WTC11 (cell line): ENCODE measurements at regions of chr11 and their contacts with region 1.

Region 1: DNA sequence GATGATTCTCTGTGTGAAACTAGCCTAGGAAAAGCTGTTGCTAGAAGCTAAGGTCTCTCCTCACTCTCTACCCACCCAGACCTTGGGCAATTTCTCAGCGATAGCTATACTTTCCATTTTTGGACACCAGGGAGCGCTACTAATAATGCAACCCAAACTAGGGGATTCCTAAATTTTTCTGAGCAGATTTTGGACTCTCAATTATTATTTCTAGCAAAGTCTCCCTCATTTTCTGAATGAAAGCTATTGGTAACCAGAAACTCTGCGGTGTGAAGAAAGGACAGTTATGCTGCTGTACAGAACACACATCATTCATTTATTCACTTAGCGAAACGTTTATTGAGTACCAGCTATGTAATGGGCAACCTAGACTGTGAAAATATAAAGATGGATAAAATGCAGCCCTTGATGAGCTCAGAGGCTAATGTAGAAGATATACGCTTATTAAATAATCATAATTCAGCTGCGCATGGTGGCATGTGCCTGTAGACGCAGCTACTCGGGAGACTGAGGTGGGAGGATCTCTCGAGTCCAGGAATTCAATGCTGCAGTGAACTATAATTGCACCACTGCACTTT is 6.1 kb upstream of the STIM1 start:
- DNase-seq: no peak
- ATAC-seq: peak; percentile 87
- H3K4me3 Mint-ChIP-seq: no peak overlapping the region
- H3K27ac Mint-ChIP-seq: no peak overlapping the region
- H3K4me1 Mint-ChIP-seq: peaks cover 9% of the 10 kb centered on the region
- H3K27me3 Mint-ChIP-seq: no peaks in the 10 kb centered on the region
- CTCF ChIP-seq: peak; percentile 37

Region 2: DNA sequence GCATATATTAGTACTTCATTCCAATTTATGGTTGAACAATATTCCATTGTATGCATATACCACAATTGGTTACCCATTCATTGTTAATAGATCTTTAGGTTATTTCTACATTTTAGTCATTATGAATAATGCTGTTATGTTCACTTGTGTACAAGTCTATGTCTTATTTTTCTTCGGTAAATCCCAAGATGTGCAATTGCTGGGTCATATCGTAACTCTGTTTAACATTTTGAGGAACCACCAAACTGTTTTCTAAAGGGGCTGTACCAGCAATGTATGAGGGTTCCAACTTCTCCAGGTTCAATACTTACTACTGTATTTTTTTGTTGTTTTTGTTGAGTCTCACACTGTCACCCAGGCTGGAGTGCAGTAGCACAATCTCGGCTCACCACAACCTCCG is 85.1 kb before region 1 on chr11:
- CTCF ChIA-PET with region 1: no interaction called
- POLR2A ChIA-PET with region 1: no interaction called
- DNase-seq: no peak
- ATAC-seq: no peak
- H3K4me3 Mint-ChIP-seq: no peak overlapping the region
- H3K27ac Mint-ChIP-seq: no peak overlapping the region
- H3K4me1 Mint-ChIP-seq: no peaks in the 10 kb centered on the region
- H3K27me3 Mint-ChIP-seq: no peaks in the 10 kb centered on the region
- CTCF ChIP-seq: no peak

Region 3: GRCh38 chr11:3807909-3808860 is 41.2 kb before region 1 on chr11 and contains the start of gene PGAP2:
- CTCF ChIA-PET with region 1: interaction called, 23 read pairs
- POLR2A ChIA-PET with region 1: no interaction called
- DNase-seq: peak; percentile 83
- ATAC-seq: peak; percentile 91
- H3K4me3 Mint-ChIP-seq: peak within 1 kb of the TSS; percentile 96
- H3K27ac Mint-ChIP-seq: peak within 1 kb of the TSS; percentile 97
- H3K4me1 Mint-ChIP-seq: peaks cover 11% of the 10 kb centered on the region
- H3K27me3 Mint-ChIP-seq: no peaks in the 10 kb centered on the region; the same call in 1 of the 2 replicates
- CTCF ChIP-seq: peak; percentile 65
- total RNA-seq, gene PGAP2: 38.2 to 43.0 TPM (median 40.7 TPM) in 3 replicates

Region 4: DNA sequence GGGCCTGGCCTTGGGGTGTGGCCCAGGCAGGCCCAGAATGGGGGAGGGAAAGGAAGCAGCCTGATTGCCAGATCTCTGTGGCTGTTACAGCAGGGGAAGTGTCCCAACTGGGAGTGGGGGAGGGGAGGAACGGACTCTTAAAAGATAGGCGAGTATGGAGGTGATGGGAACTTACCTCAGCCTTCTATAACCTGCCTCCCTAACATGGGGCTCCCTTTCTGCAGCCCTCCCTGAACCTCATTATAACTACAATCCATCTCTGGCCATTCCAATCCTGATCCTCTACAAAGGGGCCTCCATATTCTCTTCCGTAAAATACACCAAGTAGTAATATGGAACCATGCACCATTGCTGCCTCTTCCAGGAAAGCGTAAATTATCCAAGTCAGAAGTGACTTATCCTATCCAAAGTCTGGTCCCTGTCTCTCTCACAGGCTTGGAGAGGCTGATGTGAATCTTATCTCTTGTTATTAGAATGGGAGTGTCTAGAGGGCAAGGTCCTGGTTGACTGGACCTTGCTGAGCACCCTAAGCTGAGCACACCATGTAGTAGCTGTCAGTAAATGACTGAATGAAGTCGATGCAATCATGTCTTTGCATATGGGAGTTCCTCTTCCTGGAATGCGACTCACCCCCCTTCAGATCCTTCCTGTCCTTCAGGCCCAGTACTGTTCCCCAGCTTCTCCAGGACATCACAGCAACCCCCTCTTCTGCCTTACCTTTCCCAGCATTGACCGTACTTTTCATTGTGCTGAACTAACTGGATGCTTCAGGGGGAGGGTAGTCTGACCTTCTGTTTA is 14.5 kb before region 1 on chr11:
- CTCF ChIA-PET with region 1: interaction called, 165 read pairs
- POLR2A ChIA-PET with region 1: interaction called, 17 read pairs
- DNase-seq: peak; percentile 28
- ATAC-seq: peak; percentile 53
- H3K4me3 Mint-ChIP-seq: peak overlapping the region; percentile 10
- H3K27ac Mint-ChIP-seq: no peak overlapping the region
- H3K4me1 Mint-ChIP-seq: peaks cover 53% of the 10 kb centered on the region
- H3K27me3 Mint-ChIP-seq: no peaks in the 10 kb centered on the region
- CTCF ChIP-seq: no peak

Region 5: DNA sequence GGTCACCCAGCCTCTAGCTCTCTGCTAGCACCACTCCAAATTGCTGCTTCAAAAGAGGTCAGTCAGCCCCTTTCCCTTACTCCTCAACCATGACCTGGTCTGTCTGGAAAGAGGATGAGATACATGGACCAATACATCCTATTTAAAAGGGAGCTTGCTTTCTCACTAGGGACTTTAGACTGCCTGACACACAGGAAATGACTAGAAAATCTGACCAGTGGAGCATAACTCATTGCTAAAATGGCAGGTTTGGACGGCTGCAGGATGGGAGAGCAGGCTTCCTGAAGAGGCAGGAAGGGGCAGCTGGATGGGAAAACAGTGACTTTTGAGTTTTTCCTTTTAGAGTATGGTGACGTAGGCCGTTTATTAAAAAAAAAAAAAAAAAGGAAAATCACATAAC is 31.3 kb after region 1 on chr11:
- CTCF ChIA-PET with region 1: interaction called, 38 read pairs
- POLR2A ChIA-PET with region 1: no interaction called
- DNase-seq: no peak
- ATAC-seq: no peak
- H3K4me3 Mint-ChIP-seq: no peak overlapping the region
- H3K27ac Mint-ChIP-seq: no peak overlapping the region
- H3K4me1 Mint-ChIP-seq: peaks cover 16% of the 10 kb centered on the region
- H3K27me3 Mint-ChIP-seq: no peaks in the 10 kb centered on the region
- CTCF ChIP-seq: no peak

Region 6: GRCh38 chr11:3959015-3959919 is 109.9 kb after region 1 on chr11:
- CTCF ChIA-PET with region 1: interaction called, 25 read pairs
- POLR2A ChIA-PET with region 1: no interaction called
- DNase-seq: no peak
- ATAC-seq: peak; percentile 60
- H3K4me3 Mint-ChIP-seq: no peak overlapping the region
- H3K27ac Mint-ChIP-seq: no peak overlapping the region
- H3K4me1 Mint-ChIP-seq: no peaks in the 10 kb centered on the region
- H3K27me3 Mint-ChIP-seq: no peaks in the 10 kb centered on the region
- CTCF ChIP-seq: no peak